CD8-positive, alpha-beta T cell (primary cell): ENCODE measurements at regions of chr9 and their contacts with region 1.

Region 1: DNA sequence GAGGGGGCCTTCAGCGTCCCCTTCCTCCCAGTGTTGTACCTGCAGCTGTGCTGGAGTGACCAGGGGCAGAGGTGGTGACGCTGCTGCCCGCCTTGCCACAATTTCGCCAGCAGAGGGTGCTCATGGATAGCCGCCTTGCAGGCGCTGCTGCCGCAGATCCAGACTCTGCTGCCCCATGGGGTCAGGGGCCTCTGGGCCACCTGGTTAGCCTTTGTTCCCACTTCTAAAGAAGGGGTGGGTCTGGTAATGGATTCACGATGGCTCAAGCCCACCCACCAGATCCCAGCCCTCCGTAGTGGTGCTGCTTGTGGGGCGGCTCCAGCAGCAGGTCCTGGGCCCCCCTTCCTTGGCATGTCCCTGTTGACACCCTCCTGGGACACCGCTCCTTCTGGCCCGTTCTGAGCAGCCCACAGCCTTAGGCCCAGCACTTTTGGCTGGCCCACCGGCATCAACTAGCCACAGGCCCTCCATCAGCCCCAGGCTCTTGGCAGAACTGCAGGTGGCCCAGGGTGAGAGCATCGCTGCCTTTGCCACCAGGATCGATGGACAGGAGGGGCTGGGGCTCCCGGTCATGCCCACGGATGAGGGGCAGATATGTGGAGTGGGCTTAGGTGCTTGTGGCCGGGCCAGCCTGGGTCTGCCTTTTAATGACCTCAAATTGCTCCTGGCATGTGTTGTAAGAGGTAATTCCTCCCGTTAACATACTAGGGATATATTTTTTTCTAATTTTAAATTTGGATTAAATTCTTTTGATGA is 57.2 kb downstream of the COL5A1 start:
- DNase-seq: peak in 8 of 9 experiments; percentile 3 to 58 (median 34)
- ATAC-seq: no peak
- H3K4me3 ChIP-seq: no peak overlapping the region
- H3K4me3 Mint-ChIP-seq: no peak overlapping the region
- H3K27ac ChIP-seq: no peak overlapping the region
- H3K27ac Mint-ChIP-seq: no peak overlapping the region
- H3K4me1 ChIP-seq: no peaks in the 10 kb centered on the region
- H3K4me1 Mint-ChIP-seq: no peaks in the 10 kb centered on the region
- H3K27me3 ChIP-seq: no peaks in the 10 kb centered on the region
- H3K27me3 Mint-ChIP-seq: peaks cover 3% of the 10 kb centered on the region
- CTCF ChIP-seq: peak; percentile 57

Region 2: DNA sequence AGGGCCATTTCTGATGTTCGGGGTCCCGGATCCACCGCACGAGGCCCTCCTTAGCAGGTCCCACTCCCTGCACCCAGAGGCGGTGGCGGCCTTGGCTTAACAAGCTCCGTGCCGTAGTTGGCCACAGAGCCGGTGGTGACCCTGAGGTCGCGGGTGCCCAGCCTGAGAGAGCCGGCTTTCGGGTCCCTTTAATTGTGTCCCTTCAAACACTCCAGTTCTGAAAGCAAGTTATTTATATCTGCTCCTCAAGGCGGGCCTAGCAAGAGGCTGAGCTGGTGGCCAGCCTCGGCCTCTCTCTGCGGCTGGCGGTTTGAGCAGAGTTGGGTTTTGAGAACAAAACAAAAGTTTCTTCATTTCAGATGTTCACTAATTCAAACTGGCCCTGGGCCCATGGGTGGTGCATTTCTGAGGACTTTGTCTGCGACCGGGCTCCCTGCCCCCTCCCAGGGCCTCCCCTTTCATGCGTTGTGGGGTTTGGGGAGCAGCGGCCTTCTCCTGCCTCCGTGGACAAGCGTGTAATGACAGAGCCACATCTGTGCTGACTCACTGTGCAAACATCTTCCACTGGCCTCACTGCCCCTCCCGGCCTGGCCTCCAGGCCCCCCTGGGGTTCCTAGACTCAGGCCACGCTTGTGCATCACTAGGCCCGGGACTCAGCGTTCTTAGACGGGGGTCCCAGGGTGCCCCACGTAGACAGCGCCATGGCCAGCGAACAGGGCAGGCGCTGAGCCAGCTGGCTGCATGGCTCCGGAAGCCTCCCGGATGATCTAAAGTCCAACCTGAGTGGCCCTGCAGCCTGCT is 106.5 kb before region 1 on chr9:
- CTCF ChIA-PET with region 1: no interaction called
- POLR2A ChIA-PET with region 1: no interaction called
- intact Hi-C with region 1: no loop called
- DNase-seq: peak in 1 of 9 experiments; percentile 35
- ATAC-seq: no peak
- H3K4me3 ChIP-seq: no peak overlapping the region
- H3K4me3 Mint-ChIP-seq: no peak overlapping the region
- H3K27ac ChIP-seq: no peak overlapping the region
- H3K27ac Mint-ChIP-seq: no peak overlapping the region
- H3K4me1 ChIP-seq: no peaks in the 10 kb centered on the region
- H3K4me1 Mint-ChIP-seq: no peaks in the 10 kb centered on the region
- H3K27me3 ChIP-seq: no peaks in the 10 kb centered on the region
- H3K27me3 Mint-ChIP-seq: peaks cover 13% of the 10 kb centered on the region
- CTCF ChIP-seq: no peak

Region 3: DNA sequence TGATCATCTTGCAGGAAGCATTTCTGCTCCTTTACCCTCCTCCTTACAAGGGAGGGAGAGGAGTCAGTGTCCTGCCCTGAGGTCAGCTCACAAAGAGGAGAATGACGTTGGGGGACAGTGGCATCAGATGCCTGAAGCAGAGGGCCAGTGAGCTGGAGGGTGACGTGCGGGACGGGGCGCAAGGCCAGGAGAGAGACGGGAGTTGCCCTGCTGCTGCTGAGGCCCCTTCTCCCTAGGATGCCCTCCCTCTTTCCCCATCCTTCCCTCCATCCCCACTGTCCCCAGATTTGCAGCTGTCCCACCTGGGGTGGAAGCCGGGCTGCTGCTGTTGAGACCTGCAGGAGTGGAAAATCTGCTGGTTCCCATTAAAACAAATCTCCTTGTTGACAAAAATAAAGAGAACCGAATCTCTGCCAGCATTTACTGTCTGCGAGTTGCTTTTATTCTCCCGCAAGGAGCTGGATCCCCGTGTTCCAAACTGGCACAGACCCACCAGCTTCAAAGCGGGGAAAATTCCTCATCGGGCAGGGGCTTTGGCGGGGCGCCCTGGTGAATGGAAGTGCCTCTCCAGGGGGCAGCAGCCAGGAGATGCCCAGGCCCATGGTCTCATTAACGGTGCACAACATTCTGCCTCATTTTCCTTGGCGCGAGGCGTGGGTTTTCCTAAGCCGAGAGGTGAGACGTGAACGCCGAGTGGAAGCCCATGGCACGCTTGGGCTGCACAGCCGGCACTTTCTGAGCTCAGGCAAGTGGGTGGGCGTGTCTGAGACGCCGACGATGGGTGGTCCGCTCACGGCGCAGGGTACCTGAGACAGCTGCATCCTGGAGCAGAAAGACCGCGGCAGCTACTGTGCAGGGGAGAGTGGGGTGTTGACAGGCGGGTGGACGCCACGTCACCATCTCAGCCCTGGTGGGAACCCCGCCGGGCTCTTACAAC is 71.1 kb before region 1 on chr9:
- CTCF ChIA-PET with region 1: no interaction called
- POLR2A ChIA-PET with region 1: no interaction called
- intact Hi-C with region 1: no loop called
- DNase-seq: no peak
- ATAC-seq: no peak
- H3K4me3 ChIP-seq: no peak overlapping the region
- H3K4me3 Mint-ChIP-seq: no peak overlapping the region
- H3K27ac ChIP-seq: no peak overlapping the region
- H3K27ac Mint-ChIP-seq: no peak overlapping the region
- H3K4me1 ChIP-seq: no peaks in the 10 kb centered on the region
- H3K4me1 Mint-ChIP-seq: no peaks in the 10 kb centered on the region
- H3K27me3 ChIP-seq: no peaks in the 10 kb centered on the region
- H3K27me3 Mint-ChIP-seq: peaks cover 2% of the 10 kb centered on the region
- CTCF ChIP-seq: no peak

Region 4: GRCh38 chr9:134738869-134739659 is 40.3 kb after region 1 on chr9:
- CTCF ChIA-PET with region 1: no interaction called
- POLR2A ChIA-PET with region 1: no interaction called
- intact Hi-C with region 1: loop called in 1 of 2 experiments (anchors 2 kb)
- DNase-seq: peak in 7 of 9 experiments; percentile 11 to 57 (median 35)
- ATAC-seq: no peak
- H3K4me3 ChIP-seq: no peak overlapping the region
- H3K4me3 Mint-ChIP-seq: no peak overlapping the region
- H3K27ac ChIP-seq: no peak overlapping the region
- H3K27ac Mint-ChIP-seq: no peak overlapping the region
- H3K4me1 ChIP-seq: no peaks in the 10 kb centered on the region
- H3K4me1 Mint-ChIP-seq: no peaks in the 10 kb centered on the region
- H3K27me3 ChIP-seq: no peaks in the 10 kb centered on the region
- H3K27me3 Mint-ChIP-seq: peaks cover 4% of the 10 kb centered on the region
- CTCF ChIP-seq: peak; percentile 51